ENCODE measurements at regions of chrX and their contacts with region 1.

Region 1: GRCh38 chrX:130086447-130087206 is 23.7 kb downstream of the ELF4 start:
- DNase-seq: peak; percentile 37 to 90 (median 66)
- ATAC-seq: peak; percentile 73
- H3K4me3 ChIP-seq: peak overlapping the region; percentile 67
- H3K4me3 Mint-ChIP-seq: peak overlapping the region; percentile 92
- H3K27ac ChIP-seq: peak overlapping the region; percentile 29 to 76
- H3K27ac Mint-ChIP-seq: peak overlapping the region; percentile 93
- H3K4me1 ChIP-seq: peaks cover 93% of the 10 kb centered on the region
- H3K4me1 Mint-ChIP-seq: peaks cover 58% of the 10 kb centered on the region
- H3K27me3 ChIP-seq: no peaks in the 10 kb centered on the region
- H3K27me3 Mint-ChIP-seq: no peaks in the 10 kb centered on the region
- CTCF ChIP-seq: no peak

Region 2: DNA sequence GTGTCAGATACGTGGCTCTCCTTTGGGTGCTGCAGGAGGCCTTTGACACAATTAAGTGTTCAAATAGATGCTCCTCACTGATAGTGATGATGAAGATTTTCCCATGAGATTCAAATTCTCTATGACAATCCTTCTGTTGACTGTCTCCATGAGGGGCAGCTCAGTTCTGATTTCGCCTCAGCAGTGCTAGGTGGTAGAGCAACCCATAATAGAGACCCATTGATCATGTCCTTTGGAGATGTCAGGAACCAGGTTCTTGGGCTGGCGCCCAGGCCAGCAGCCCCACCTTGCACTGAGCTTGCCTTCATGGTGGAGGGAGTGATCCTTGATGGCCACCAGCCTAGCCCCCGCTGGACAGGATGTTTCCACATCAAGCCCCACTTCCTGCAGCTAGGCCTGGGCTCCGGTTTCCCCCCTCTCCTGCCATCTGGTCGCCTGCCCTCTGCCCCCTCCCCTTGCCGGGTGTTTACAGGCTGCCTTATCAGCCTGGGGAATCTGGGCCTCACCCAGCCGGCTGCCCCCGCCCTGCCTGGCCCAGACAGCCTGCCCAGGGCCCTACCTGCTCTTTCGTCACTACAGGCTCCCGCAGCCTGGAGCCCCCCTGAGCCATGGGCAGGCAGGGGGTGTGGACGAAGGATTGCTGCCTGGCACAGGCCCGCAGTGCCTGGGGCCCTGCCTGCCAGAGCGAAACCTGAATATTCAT is 11.0 kb after region 1 on chrX:
- CTCF ChIA-PET with region 1: interaction called, 22 read pairs
- POLR2A ChIA-PET with region 1: interaction called, 14 read pairs
- intact Hi-C with region 1: no loop called
- DNase-seq: peak in 10 of 14 experiments; percentile 21 to 73 (median 44)
- ATAC-seq: peak; percentile 88
- H3K4me3 ChIP-seq: no peak overlapping the region
- H3K4me3 Mint-ChIP-seq: peak overlapping the region; percentile 38
- H3K27ac ChIP-seq: peak overlapping the region; percentile 52 to 56
- H3K27ac Mint-ChIP-seq: peak overlapping the region; percentile 86
- H3K4me1 ChIP-seq: peaks cover 91% of the 10 kb centered on the region
- H3K4me1 Mint-ChIP-seq: peaks cover 66% of the 10 kb centered on the region
- H3K27me3 ChIP-seq: no peaks in the 10 kb centered on the region
- H3K27me3 Mint-ChIP-seq: no peaks in the 10 kb centered on the region
- CTCF ChIP-seq: no peak

Region 3: DNA sequence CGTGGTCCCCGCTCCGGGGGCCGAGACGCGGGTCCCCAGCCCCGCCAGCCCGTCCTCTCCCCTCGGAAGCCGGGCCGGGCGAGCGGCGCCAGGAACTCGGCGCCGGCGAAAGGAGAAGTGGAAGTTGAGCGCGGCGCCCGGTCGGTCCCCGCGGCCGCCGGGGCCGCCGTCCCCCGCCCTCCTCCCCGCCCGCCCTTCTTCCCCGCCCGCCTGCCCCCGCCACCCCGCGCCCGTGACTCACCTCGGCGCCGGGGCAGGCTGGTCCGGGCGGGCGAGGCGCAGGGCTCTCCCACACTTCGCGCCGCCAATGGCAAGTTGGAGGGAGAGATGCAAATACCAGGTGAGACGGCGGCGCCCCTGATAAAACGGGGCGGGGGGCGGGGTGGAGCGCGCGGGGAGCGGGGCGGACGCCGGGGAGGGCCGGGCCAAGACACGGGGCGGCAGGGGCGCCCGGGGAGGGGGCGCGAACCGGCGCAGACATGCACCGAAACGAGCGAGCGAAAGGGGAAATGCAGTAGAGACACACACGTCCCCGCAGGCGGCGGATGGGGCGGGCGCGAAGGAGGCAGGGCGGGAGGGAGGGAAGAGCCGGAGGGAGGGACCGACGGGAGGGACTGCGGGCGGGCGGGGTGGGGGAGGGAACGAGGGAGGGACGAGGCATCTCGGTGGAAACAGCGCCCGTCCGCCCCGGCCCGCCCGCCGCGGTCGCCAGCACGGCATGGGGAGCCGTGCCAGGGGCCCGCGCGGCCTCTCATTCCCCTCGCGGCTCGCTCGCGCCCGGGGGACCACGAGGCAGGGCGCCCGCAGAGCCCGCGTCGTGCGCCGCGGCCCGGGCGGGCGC is 24.0 kb after region 1 on chrX and contains the start of gene ELF4:
- CTCF ChIA-PET with region 1: interaction called, 10 read pairs
- POLR2A ChIA-PET with region 1: interaction called, 15 read pairs
- intact Hi-C with region 1: loop called in 1 of 2 experiments (anchors 2 kb)
- DNase-seq: peak in 12 of 14 experiments; percentile 19 to 85 (median 57)
- ATAC-seq: peak; percentile 76
- H3K4me3 ChIP-seq: peak within 1 kb of the TSS; percentile 83
- H3K4me3 Mint-ChIP-seq: peak within 1 kb of the TSS; percentile 95
- H3K27ac ChIP-seq: peak within 1 kb of the TSS; percentile 50 to 52
- H3K27ac Mint-ChIP-seq: peak within 1 kb of the TSS; percentile 82
- H3K4me1 ChIP-seq: peaks cover 37% of the 10 kb centered on the region
- H3K4me1 Mint-ChIP-seq: peaks cover 25% of the 10 kb centered on the region
- H3K27me3 ChIP-seq: no peaks in the 10 kb centered on the region
- H3K27me3 Mint-ChIP-seq: no peaks in the 10 kb centered on the region
- CTCF ChIP-seq: no peak
- total RNA-seq, gene ELF4: 17.3 to 17.4 TPM

Region 4: GRCh38 chrX:130120746-130121504 is 34.3 kb after region 1 on chrX:
- CTCF ChIA-PET with region 1: interaction called, 76 read pairs
- POLR2A ChIA-PET with region 1: interaction called, 9 read pairs
- intact Hi-C with region 1: loop called (anchors 1 to 2 kb)
- DNase-seq: peak; percentile 39 to 83 (median 58)
- ATAC-seq: peak; percentile 89
- H3K4me3 ChIP-seq: peak overlapping the region; percentile 56
- H3K4me3 Mint-ChIP-seq: peak overlapping the region; percentile 56
- H3K27ac ChIP-seq: no peak overlapping the region
- H3K27ac Mint-ChIP-seq: no peak overlapping the region
- H3K4me1 ChIP-seq: peaks cover 31% of the 10 kb centered on the region
- H3K4me1 Mint-ChIP-seq: peaks cover 5% of the 10 kb centered on the region
- H3K27me3 ChIP-seq: no peaks in the 10 kb centered on the region
- H3K27me3 Mint-ChIP-seq: no peaks in the 10 kb centered on the region
- CTCF ChIP-seq: peak; percentile 71

Region 5: DNA sequence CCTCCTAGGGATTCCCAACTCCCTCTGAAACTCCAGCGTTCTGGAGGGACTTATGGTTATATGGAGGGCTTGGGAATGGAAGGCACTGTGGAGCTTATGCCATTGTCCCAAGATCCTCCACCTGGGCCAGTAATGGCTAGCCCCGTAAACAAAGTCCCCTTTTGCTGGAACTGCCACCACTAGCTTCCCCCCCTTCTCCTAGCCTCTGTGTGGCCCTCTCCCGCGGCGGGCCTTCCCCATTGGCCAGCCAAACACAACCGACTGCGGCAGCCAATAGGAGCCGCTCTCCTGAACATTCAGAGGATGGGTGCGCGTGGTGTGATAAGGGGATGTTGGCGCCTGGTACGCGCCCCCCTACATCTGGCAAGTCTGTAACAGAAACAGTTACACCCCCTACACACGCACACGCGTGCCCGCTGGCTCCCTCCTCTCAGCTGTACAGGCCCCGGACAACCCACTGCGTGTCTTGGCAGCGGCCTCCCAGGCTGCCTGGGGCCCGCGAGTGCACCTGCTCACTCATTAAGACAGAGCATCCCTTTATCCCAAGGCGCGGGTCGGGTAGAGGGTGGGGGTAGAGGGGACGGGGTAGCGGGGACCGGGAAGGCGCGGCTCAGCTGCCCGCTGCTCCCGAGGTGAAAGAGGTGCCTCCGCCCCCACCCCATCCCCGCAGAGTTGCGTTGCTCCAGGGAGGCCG is 84.3 kb after region 1 on chrX:
- CTCF ChIA-PET with region 1: interaction called, 5 read pairs
- POLR2A ChIA-PET with region 1: interaction called, 5 read pairs
- intact Hi-C with region 1: loop called in 1 of 2 experiments (anchors 5 kb)
- DNase-seq: peak; percentile 24 to 79 (median 54)
- ATAC-seq: peak; percentile 72
- H3K4me3 ChIP-seq: peak overlapping the region; percentile 89
- H3K4me3 Mint-ChIP-seq: peak overlapping the region; percentile 90
- H3K27ac ChIP-seq: peak overlapping the region in 1 of 2 donors; percentile 53
- H3K27ac Mint-ChIP-seq: peak overlapping the region; percentile 91
- H3K4me1 ChIP-seq: peaks cover 40% of the 10 kb centered on the region
- H3K4me1 Mint-ChIP-seq: peaks cover 46% of the 10 kb centered on the region
- H3K27me3 ChIP-seq: no peaks in the 10 kb centered on the region
- H3K27me3 Mint-ChIP-seq: no peaks in the 10 kb centered on the region
- CTCF ChIP-seq: no peak

Measured in CD4-positive, alpha-beta T cell (primary cell).